Naive thymus-derived CD8-positive, alpha-beta T cell (primary cell): ENCODE measurements at regions of chr1 and their contacts with region 1.

Region 1: GRCh38 chr1:209784265-209785169 is at the start of gene C1orf74:
- DNase-seq: peak; percentile 97 to 100 (median 99)
- ATAC-seq: peak; percentile 97 to 98
- H3K4me3 Mint-ChIP-seq: peak within 1 kb of the TSS; percentile 86 to 98 (median 94)
- H3K27ac Mint-ChIP-seq: peak within 1 kb of the TSS; percentile 95 to 99 (median 99)
- H3K4me1 Mint-ChIP-seq: peaks cover 12 to 47% (median 36%) of the 10 kb centered on the region in 4 donors
- H3K27me3 Mint-ChIP-seq: peaks cover 0 to 14% (median 4%) of the 10 kb centered on the region in 5 donors
- polyA plus RNA-seq, gene C1orf74: 0.30 to 0.88 (median 0.55) TPM

Region 2: GRCh38 chr1:209747580-209748262 is 36.8 kb before region 1 on chr1:
- POLR2A ChIA-PET with region 1: interaction called, 1,192 read pairs
- DNase-seq: peak; percentile 59 to 90 (median 80)
- ATAC-seq: peak; percentile 85 to 88
- H3K4me3 Mint-ChIP-seq: peak overlapping the region; percentile 82 to 95 (median 92)
- H3K27ac Mint-ChIP-seq: peak overlapping the region; percentile 93 to 98 (median 96)
- H3K4me1 Mint-ChIP-seq: peaks cover 21 to 58% (median 46%) of the 10 kb centered on the region in 4 donors
- H3K27me3 Mint-ChIP-seq: no peaks in the 10 kb centered on the region

Region 3: DNA sequence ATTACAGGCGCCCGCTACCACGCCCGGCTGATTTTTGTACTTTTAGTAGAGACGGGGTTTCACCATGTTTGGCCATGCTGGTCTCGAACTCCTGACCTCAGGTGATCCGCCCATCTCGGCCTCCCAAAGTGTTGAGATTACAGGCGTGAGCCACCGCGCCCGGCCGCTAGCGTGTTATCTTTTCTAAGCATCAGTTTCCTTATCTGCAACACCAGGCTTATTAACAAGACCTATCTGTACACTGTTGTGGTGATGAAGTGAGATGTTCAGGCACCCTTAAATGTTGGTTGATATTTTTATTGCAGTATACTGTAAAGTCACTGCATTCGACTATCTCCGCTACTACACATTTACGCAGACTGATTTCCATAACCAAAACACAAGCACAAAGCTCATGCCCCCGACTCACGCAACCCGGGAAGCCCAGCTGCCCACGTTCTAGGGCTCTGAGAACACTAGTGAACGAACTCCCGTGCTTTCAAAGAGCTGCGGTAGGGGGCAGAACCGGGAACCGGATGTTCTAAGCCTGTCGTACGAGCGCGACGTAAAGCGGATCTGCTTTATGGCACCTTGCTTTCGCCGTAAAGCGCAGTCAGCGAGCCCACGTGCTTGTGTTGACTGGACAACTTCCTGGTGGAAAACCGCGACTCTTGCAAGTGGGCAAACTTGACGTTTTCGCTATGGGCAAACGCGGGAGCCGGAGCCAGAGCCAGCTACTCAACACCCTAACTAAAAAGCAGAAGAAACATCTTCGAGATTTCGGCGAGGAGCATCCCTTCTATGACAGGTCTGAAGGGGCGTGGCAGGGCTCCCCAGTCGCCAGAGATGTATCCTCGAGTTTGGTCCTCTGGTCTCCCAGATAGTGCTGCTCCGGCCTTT is 43.1 kb after region 1 on chr1 and contains the start of gene UTP25:
- POLR2A ChIA-PET with region 1: interaction called, 10 read pairs
- DNase-seq: peak; percentile 71 to 95 (median 92)
- ATAC-seq: peak; percentile 88 to 90
- H3K4me3 Mint-ChIP-seq: peak within 1 kb of the TSS; percentile 81 to 98 (median 96)
- H3K27ac Mint-ChIP-seq: peak within 1 kb of the TSS; percentile 60 to 98 (median 92)
- H3K4me1 Mint-ChIP-seq: peaks cover 19 to 54% (median 48%) of the 10 kb centered on the region in 4 donors
- H3K27me3 Mint-ChIP-seq: peaks cover 4 to 7% (median 5%) of the 10 kb centered on the region in 5 donors
- polyA plus RNA-seq, gene UTP25: 3.0 to 5.6 (median 3.1) TPM